ACHN (cell line): ENCODE measurements at regions of chr15 and their contacts with region 1.

Region 1: GRCh38 chr15:65638681-65639089 is 16.9 kb downstream of the SLC24A1 start:
- DNase-seq: peak; percentile 74

Region 2: GRCh38 chr15:65869127-65869953 is 230.7 kb after region 1 on chr15 and contains the start of gene RAB11A:
- in situ Hi-C with region 1: loop called (anchors 25 kb)
- DNase-seq: peak; percentile 92